Activated naive CD8-positive, alpha-beta T cell treated with anti-CD3 and anti-CD28 coated beads, Interleukin-2, amount 10 ng/mL, durations not matched to agents 7 days and 5 days (primary cell): ENCODE measurements at regions of chr2 and their contacts with region 1.

Region 1: DNA sequence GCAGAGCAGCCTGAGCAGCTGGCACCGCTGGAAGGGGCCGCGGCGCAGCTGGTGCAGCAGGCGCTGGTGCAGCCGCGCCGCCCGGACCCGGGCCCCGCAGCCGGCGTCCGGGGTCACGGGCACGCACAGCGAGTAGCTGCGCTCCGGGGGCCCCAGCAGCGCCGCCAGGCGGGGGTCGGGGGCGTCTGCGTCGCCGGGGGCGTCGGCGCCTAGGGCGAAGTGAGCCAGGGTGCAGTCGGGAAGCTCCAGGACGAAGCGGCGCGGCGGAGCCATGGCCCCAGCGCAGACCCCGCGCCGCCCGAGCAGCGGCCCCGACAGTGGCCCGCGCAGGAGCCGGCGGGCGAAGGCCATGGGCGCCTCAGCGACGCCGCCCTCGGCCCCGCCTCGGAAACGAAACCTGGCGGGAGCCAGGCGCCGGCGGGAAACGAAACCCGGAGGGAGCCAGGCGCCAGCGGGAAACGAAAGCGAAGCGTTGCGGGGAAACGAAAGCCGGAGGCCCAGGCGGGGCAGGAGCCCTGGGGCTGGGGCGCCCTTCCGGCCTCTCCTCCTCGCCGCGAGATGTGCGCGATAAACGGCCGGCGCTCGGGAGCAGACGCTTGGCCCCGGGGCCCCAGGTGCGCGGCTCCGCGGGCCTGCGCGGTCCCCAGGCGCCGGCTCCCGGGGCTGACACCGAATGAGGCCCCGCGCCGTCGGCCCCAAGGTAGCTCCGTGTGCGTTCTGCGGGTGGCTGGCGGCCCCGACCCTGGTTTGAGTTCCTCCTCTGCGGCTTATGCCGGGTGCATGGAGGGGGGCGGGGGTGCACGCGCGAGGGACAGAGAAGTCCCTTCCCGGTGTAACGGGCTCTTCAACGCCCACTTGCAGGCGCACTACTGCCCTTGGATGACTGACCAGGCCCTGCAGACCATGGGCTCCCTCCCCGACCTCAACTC is at the start of gene CMPK2:
- DNase-seq: peak; percentile 96
- ATAC-seq: peak; percentile 83
- H3K4me3 Mint-ChIP-seq: peak within 1 kb of the TSS; percentile 98
- H3K27ac Mint-ChIP-seq: peak within 1 kb of the TSS; percentile 100
- H3K4me1 Mint-ChIP-seq: peaks cover 54% of the 10 kb centered on the region
- H3K27me3 Mint-ChIP-seq: no peaks in the 10 kb centered on the region
- total RNA-seq, gene CMPK2: 102 to 106 TPM

Region 2: GRCh38 chr2:6730649-6731532 is 134.7 kb before region 1 on chr2:
- POLR2A ChIA-PET with region 1: no interaction called
- DNase-seq: no peak
- ATAC-seq: no peak
- H3K4me3 Mint-ChIP-seq: no peak overlapping the region
- H3K27ac Mint-ChIP-seq: no peak overlapping the region
- H3K4me1 Mint-ChIP-seq: no peaks in the 10 kb centered on the region
- H3K27me3 Mint-ChIP-seq: peaks cover 20% of the 10 kb centered on the region

Region 3: GRCh38 chr2:6835467-6835866 is 30.1 kb before region 1 on chr2:
- POLR2A ChIA-PET with region 1: interaction called, 16 read pairs
- DNase-seq: no peak
- ATAC-seq: peak; percentile 59
- H3K4me3 Mint-ChIP-seq: no peak overlapping the region
- H3K27ac Mint-ChIP-seq: no peak overlapping the region
- H3K4me1 Mint-ChIP-seq: peaks cover 18% of the 10 kb centered on the region
- H3K27me3 Mint-ChIP-seq: no peaks in the 10 kb centered on the region

Region 4: DNA sequence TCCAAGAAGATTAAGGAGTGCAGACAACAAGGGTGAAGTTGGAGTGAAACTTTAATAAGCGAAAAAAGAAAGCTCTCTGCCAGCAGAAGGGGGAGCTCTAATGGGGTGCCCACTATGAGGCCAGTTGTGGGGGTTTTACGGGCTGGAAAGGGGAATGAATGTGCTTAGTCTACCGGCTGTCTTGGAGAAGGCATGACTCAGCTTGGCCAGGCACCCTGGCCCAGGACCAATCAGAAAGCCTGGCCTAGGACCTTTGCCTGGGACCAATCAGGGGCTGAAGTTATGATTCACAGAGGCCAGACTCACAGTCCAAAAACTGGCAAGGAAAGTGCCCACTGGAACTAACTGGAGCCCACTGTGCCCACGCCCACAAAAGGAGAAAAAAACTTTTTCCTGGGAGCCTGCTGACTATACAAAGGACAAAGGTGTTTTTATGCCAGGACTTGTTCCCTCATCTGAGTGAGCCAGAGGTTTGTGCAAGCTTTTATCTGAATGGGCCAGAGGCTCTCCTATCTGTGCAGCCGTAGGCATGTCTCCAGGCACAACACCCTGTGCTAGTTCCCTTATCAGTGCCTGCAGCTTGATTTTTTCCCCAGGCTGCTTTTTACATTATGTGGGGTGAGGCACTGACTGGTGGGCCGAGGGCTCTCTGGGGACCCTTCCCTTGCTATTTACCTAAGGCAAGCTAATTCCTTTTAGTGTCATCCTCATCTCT is 18.5 kb before region 1 on chr2:
- POLR2A ChIA-PET with region 1: interaction called, 29 read pairs
- DNase-seq: no peak
- ATAC-seq: no peak
- H3K4me3 Mint-ChIP-seq: no peak overlapping the region
- H3K27ac Mint-ChIP-seq: peak overlapping the region; percentile 38
- H3K4me1 Mint-ChIP-seq: peaks cover 33% of the 10 kb centered on the region
- H3K27me3 Mint-ChIP-seq: no peaks in the 10 kb centered on the region

Region 5: DNA sequence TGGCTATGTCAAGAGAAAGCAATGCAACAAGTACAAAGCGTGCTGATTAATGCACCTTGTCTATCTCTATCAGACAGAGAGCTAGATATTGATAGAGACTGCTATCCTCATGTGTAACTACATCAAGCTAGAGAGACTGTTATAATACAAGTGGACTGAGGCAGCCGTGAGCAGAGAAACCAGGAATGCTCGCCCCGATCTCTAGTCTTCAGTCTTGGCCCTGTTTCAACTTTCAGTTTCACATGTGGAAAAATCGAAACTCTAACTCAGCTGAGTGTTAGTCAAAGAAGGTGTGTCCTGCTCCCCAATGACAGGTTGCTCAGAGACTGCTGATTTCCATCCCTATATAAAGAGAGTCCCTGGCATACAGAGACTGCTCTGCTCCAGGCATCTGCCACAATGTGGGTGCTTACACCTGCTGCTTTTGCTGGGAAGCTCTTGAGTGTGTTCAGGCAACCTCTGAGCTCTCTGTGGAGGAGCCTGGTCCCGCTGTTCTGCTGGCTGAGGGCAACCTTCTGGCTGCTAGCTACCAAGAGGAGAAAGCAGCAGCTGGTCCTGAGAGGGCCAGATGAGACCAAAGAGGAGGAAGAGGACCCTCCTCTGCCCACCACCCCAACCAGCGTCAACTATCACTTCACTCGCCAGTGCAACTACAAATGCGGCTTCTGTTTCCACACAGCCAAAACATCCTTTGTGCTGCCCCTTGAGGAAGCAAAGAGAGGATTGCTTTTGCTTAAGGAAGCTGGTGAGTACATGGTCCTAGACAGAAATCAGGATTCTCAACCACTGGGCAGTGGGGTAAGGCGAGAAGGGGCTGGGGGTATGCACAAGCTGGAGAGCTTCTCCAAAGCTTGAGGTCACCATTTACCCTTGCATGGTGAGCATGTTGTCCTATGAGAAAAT is 12.0 kb after region 1 on chr2 and contains the start of gene RSAD2:
- POLR2A ChIA-PET with region 1: interaction called, 557 read pairs
- DNase-seq: peak; percentile 68
- ATAC-seq: peak; percentile 81
- H3K4me3 Mint-ChIP-seq: peak within 1 kb of the TSS; percentile 99
- H3K27ac Mint-ChIP-seq: peak within 1 kb of the TSS; percentile 95
- H3K4me1 Mint-ChIP-seq: peaks cover 56% of the 10 kb centered on the region
- H3K27me3 Mint-ChIP-seq: no peaks in the 10 kb centered on the region
- total RNA-seq, gene RSAD2: 104 to 105 TPM

Region 6: DNA sequence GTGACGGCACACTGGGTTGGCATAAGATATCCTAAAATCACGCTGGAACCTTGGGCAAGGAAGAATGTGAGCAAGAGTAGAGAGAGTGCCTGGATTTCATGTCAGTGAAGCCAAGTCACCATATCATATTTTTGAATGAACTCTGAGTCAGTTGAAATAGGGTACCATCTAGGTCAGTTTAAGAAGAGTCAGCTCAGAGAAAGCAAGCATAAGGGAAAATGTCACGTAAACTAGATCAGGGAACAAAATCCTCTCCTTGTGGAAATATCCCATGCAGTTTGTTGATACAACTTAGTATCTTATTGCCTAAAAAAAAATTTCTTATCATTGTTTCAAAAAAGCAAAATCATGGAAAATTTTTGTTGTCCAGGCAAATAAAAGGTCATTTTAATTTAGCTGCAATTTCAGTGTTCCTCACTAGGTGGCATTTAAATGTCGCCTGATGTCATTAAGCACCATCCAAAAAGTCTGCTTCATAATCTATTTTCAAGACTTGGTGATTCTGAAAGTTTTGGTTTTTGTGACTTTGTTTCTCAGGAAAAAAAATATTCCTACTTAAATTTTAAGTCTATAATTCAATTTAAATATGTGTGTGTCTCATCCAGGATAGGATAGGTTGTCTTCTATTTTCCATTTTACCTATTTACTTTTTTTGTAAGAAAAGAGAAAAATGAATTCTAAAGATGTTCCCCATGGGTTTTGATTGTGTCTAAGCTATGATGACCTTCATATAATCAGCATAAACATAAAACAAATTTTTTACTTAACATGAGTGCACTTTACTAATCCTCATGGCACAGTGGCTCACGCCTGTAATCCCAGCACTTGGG is 31.5 kb after region 1 on chr2:
- POLR2A ChIA-PET with region 1: interaction called, 11 read pairs
- DNase-seq: no peak
- ATAC-seq: no peak
- H3K4me3 Mint-ChIP-seq: no peak overlapping the region
- H3K27ac Mint-ChIP-seq: peak overlapping the region; percentile 35
- H3K4me1 Mint-ChIP-seq: peaks cover 20% of the 10 kb centered on the region
- H3K27me3 Mint-ChIP-seq: no peaks in the 10 kb centered on the region

Region 7: DNA sequence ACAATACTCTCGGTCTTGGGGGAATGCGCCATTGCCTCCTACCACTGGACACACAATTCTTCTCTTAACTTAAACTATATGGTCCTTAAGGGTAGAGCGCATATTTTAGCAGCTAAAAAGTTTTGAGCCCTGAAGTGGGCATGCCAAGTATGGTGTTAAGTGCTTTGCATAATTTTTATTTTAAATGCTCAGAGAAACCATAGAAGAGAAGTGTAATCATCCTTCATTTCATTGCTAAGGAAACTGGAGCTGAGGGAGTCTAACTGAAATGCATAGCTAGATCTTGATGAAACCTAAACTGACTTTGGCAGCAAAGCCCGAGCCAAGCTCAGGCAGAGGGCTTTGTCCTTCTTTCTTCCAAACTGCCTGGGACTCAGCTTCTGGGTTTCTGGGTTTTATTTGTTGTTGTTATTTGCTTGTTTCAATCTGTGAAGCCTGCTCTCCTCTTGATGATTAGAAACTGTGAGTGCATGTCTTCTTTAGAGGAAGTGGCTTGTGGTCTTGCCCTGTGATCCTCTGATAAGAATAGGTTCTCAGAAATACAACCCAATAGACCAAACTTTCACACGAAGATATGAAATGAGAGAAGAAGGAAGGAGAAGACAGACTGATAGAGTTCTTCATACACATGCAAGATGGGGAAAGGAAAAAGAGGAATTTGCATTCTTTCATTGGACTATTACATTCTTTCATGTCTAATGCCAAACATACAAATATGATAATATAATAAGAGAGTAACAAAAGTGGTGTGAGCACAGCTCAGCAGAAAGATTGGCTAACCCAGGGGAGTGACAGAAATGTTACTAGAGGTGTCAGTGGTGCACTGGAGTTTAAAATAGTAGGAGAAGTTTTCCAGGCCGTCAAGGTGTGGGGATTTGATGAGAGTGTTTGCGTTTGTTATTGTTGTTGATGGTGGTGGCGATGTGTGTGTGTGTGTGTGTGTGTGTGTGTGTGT is 44.1 kb after region 1 on chr2:
- POLR2A ChIA-PET with region 1: interaction called, 56 read pairs
- DNase-seq: no peak
- ATAC-seq: peak; percentile 73
- H3K4me3 Mint-ChIP-seq: peak overlapping the region; percentile 84
- H3K27ac Mint-ChIP-seq: peak overlapping the region; percentile 98
- H3K4me1 Mint-ChIP-seq: peaks cover 66% of the 10 kb centered on the region
- H3K27me3 Mint-ChIP-seq: no peaks in the 10 kb centered on the region

Region 8: GRCh38 chr2:6917071-6917760 is 51.6 kb after region 1 on chr2 and contains the start of gene RNF144A:
- POLR2A ChIA-PET with region 1: interaction called, 36 read pairs
- DNase-seq: peak; percentile 95
- ATAC-seq: peak; percentile 74
- H3K4me3 Mint-ChIP-seq: peak within 1 kb of the TSS; percentile 88
- H3K27ac Mint-ChIP-seq: peak within 1 kb of the TSS; percentile 91
- H3K4me1 Mint-ChIP-seq: peaks cover 67% of the 10 kb centered on the region
- H3K27me3 Mint-ChIP-seq: no peaks in the 10 kb centered on the region
- total RNA-seq, gene RNF144A: 78.7 to 91.1 TPM